ENCODE measurements at regions of chr15 and their contacts with region 1.

Region 1: DNA sequence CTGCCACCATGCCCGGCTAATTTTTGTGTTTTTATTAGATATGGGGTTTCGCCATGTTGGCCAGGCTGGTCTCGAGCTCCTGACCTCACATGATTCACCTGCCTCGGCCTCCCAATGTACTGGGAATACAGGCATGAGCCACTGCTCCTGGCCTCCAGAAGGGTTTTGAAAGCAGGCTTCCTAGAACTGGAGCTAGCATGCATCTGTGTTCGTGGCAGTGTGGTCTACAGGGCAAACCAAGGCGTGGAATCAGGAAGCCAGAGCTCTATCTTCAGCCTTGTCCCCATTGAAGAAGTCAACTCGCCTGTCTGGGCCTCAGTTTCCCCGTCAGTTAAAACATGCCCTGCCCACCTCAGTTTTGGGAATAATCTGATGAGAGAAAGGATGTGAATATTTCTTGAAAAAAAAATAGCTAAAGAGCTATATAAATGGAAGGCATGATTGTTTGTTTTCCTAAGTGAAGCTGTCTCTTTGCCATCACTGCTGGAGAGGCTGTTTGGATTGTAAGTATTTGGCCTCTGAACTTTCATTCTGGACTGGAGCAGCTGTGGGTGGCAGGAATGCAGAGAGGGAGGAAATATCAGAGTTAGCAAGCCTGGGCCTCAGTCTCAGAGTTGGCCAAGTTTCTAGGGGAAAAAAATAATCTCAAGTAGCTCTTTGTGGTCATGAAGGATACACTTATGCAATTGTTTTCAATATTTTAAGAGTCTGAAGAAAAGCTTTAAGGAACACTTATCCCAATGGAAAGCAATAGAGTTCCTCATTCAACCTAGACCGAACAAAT is 36.5 kb upstream of the UACA start:
- H3K4me3 ChIP-seq: no peak overlapping the region
- H3K27ac ChIP-seq: no peak overlapping the region
- H3K4me1 ChIP-seq: peaks cover 4% of the 10 kb centered on the region; the same call in 1 of the 2 replicates
- CTCF ChIP-seq: no peak

Region 2: DNA sequence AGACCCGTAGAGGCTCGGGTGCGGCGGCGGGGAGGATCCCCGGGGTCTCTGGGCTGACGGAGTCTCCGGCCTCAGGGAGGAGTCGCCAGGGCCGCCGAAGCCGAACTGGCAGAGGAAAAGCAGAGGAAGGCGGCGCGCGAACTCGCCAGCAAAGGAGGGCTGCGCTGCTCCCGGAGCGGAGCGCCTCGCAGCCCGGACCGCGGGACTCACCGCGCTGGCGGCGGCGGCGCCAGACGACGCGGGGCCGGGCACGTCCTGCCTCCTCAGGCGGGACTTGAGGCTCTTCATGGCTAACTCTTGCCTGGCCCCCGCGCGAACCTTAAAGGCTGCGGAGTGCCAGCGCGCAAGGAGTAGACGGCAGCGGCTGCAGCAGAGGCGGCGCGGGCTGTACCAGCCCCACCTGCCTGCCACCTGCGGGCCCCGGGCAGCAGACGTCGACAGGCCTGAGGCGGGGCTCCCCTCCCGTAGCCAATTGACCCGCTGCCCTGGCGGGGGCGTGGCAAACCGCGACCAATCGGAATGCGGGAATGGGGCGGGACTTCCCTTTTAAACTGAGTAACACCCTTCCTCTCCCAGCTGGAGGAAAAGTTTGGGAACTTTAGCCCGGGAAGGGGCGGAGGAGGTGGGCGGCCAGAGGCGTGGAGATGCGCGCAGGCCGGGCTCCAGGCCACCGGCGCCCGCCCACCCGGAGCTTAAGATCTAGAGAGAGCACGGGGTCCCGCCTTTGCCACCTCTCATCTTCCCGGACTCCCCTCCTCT is 36.6 kb before region 1 on chr15 and contains the start of gene UACA:
- CTCF ChIA-PET with region 1: no interaction called
- POLR2A ChIA-PET with region 1: interaction called, 13 read pairs
- H3K4me3 ChIP-seq: peak within 1 kb of the TSS; percentile 90
- H3K27ac ChIP-seq: peak within 1 kb of the TSS; percentile 98
- H3K4me1 ChIP-seq: peaks cover 57% of the 10 kb centered on the region
- CTCF ChIP-seq: peak; percentile 50; the same call in 1 of the 2 replicates

Measured in HEK293 (cell line).